Heart left ventricle (tissue), 16 donors: ENCODE measurements at regions of chr22 and their contacts with region 1.

Region 1: GRCh38 chr22:17084554-17085276 is at the start of gene IL17RA:
- DNase-seq: peak; percentile 92 to 95 (median 93)
- ATAC-seq: peak; percentile 99 to 100 (median 99)
- H3K4me3 ChIP-seq: peak within 1 kb of the TSS; percentile 71 to 98 (median 90)
- H3K27ac ChIP-seq: peak within 1 kb of the TSS; percentile 67 to 98 (median 86)
- H3K4me1 ChIP-seq: peaks cover 0 to 49% (median 16%) of the 10 kb centered on the region in 12 donors
- H3K27me3 ChIP-seq: no peaks in the 10 kb centered on the region
- CTCF ChIP-seq: no peak
- POLR2A ChIP-seq: peak in 1 of 2 donors; percentile 87
- total RNA-seq, gene IL17RA: 5.8 to 23.1 (median 9.4) TPM

Region 2: GRCh38 chr22:17158568-17159503 is 74.1 kb after region 1 on chr22 and contains the start of gene HDHD5:
- intact Hi-C with region 1: loop called in 2 of 10 experiments (anchors 2 to 5 kb)
- DNase-seq: peak; percentile 92 to 96 (median 93)
- ATAC-seq: peak; percentile 84 to 95 (median 93)
- H3K4me3 ChIP-seq: peak within 1 kb of the TSS; percentile 69 to 94 (median 80)
- H3K27ac ChIP-seq: peak within 1 kb of the TSS; percentile 82 to 97 (median 92)
- H3K4me1 ChIP-seq: peaks cover 0 to 40% (median 25%) of the 10 kb centered on the region in 12 donors
- H3K27me3 ChIP-seq: no peaks in the 10 kb centered on the region
- CTCF ChIP-seq: peak in 2 of 12 donors; percentile 6 to 18
- POLR2A ChIP-seq: peak in 1 of 2 donors; percentile 49
- total RNA-seq, gene HDHD5: 35.7 to 60.3 (median 49.0) TPM

Region 3: DNA sequence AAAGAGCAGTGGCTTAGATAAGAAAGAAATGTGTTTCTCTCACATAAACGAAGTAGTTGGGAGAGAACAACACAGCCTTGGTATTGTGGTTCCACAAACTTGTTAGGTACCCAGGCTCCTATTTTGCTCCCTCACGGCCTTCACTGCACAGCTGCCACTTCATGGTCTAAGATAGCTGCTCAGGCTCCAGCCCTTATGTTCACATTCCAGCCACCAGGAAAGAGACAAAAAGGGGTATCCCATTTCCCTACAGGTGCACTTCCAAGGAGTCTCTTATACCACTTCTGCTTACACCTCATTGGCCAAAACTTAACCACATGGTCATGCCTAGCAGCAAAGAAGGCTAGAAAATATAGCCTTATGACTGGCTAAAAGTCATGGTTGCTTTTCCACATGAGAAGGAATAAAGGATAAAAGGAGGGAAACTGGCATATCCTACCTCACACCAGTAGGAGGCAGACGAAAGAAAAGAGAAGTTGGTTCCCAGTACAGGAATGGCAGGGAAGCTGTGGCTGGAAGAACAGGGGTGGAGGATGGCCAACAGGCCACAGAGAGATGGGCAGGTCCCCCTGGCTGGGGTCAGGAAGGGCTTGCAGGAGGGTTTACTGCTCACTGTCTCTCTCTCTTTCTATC is 79.8 kb after region 1 on chr22:
- intact Hi-C with region 1: loop called in 4 of 10 experiments (anchors 2 to 5 kb)
- DNase-seq: no peak
- ATAC-seq: no peak
- H3K4me3 ChIP-seq: no peak overlapping the region
- H3K27ac ChIP-seq: no peak overlapping the region
- H3K4me1 ChIP-seq: peaks cover 0 to 23% (median 7%) of the 10 kb centered on the region in 12 donors
- H3K27me3 ChIP-seq: no peaks in the 10 kb centered on the region
- CTCF ChIP-seq: peak in 1 of 12 donors; percentile 12
- POLR2A ChIP-seq: no peak

Region 4: GRCh38 chr22:17647991-17648390 is 563.3 kb after region 1 on chr22:
- intact Hi-C with region 1: loop called in 1 of 10 experiments (anchors 10 kb)
- DNase-seq: no peak
- ATAC-seq: no peak
- H3K4me3 ChIP-seq: no peak overlapping the region
- H3K27ac ChIP-seq: no peak overlapping the region
- H3K4me1 ChIP-seq: peaks cover 0 to 18% (median 0%) of the 10 kb centered on the region in 12 donors
- H3K27me3 ChIP-seq: no peaks in the 10 kb centered on the region
- CTCF ChIP-seq: no peak
- POLR2A ChIP-seq: no peak